ENCODE measurements at regions of chr6 and their contacts with region 1.

Region 1: DNA sequence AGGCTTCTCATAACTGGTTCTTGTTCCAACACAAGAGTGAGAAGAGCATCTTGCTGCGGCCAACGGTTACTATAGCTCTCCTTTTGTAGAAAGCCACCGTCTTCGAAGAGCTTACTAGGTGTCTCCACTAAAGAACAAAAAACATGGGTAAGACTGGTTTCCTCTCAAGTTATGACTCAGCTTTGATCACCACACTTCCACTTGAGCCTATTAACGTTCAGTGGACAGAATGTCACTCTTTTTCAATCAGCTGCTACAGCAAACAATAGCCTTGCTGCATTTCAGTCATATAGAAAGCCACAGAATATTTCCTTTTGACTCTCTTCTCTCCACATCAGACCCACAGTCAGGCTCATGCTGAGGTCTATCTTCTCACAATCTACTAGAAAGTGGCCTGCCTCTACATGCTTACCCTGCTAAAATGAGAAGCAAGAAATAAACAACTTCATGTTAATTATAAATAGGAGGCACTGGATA is 243.5 kb upstream of the PREP start:
- DNase-seq: peak; percentile 70
- H3K4me3 Mint-ChIP-seq: no peak overlapping the region
- H3K27ac Mint-ChIP-seq: peak overlapping the region; percentile 85
- H3K4me1 Mint-ChIP-seq: peaks cover 78% of the 10 kb centered on the region
- H3K27me3 Mint-ChIP-seq: peaks cover 4% of the 10 kb centered on the region

Region 2: DNA sequence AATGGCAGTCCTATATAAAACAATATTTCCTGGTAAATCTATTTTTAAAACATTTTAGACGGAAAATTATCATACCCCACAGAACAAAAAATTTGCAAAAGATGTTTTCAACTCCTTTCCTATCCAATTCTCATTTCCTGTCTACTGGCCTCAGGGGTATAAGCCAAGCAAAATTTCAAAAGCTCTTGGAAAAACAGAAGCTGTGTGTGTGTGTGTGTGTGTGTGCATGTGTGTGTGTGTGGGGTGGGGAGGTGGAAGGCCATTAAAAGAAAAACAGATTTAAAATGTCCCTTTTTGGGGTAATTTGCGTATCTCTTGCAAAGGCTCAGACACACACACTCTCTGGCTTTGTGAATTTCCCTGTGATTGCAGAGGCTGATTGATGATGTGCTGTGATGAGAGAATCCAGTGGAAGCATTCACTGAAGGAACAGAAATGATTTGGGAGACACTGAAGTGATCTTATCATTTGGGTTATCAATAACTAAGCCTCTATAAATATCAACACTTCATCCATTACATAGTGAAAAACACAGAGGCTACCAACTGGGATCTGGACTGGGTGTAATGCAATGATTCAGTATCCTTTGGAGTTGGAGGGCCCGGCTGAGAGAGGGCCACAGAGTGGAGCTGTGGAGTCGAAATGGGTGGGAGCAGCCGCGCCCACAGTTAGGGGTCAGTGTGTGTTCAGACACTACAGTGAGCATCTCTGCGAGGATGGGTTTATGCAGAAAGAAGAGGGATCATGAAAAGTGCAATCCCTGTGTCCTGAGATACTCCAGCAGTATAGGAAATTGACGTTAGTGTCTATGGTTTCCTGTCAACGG is 136.7 kb before region 1 on chr6:
- intact Hi-C with region 1: loop called (anchors 1 kb)
- DNase-seq: no peak
- H3K4me3 Mint-ChIP-seq: no peak overlapping the region
- H3K27ac Mint-ChIP-seq: peak overlapping the region; percentile 1
- H3K4me1 Mint-ChIP-seq: peaks cover 32% of the 10 kb centered on the region
- H3K27me3 Mint-ChIP-seq: peaks cover 27% of the 10 kb centered on the region

Region 3: DNA sequence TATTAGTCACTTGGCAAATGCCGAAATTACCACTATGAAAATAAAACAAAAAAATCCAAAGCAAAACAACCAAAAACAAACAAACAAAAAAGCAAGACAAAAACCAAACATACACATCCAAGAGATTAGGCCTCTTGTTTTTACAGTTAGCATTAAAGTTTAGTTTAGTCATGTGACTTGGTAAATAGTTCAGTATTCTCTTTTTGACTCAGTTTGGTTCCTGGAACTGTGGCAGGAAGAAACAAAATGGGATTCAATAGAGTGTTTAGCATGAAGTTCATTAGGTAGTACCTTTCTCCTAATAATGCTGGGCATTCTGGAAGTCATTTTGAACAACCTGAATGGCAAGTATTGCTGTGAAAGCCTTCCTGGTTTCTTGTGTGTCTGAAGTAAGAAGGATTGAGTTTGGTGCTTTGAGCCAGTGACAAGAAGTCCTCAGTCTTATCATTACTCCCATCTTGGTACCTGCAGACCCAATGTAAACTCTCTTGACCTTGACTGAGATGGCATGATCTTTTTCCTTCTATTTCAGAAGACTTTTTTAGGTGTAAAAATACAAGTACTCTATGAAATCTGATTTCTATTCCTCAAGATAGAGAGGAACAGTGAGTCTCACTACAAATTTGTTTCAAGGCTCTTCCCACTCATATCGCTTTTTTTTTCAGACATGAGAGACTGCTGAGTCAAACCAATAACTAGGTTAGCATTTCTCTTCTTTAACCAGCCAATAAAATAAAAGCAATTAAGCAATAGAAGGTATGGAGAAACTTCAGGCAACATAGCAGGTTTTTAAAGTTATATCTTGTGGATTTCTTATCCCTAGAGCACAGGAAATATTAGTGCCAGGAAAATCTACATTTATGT is 19.9 kb before region 1 on chr6:
- intact Hi-C with region 1: loop called (anchors 1 kb)
- DNase-seq: no peak
- H3K4me3 Mint-ChIP-seq: peak overlapping the region; percentile 32
- H3K27ac Mint-ChIP-seq: peak overlapping the region; percentile 89
- H3K4me1 Mint-ChIP-seq: peaks cover 59% of the 10 kb centered on the region
- H3K27me3 Mint-ChIP-seq: peaks cover 3% of the 10 kb centered on the region

Region 4: DNA sequence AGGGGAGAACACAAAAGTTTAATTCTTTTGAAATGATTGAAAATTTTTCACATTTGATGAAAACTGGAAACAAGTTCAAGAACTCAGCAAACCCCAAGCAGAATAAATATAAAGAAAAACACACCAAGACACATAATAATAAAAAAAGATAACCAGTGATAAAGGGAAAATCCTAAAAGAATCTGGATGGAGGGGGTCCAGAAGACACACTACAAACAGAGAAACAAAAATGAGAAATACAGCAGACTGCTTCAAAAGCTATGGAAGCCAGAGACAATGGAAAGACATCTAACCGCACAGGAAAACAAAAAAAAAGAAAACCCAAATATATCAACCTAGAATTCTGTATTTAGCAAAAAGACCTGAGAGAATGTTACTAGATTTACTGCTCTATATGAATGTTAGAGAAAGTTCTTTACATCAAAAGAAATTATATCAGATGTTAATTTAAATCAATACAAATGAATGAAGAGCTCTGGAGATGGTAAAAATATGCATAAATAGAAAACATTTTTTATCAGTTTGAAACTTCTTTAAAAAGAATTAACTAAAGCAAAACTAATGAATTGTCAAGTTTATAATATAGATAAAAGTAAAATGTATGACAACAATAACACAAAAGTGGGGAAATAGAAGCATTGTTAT is 67.2 kb after region 1 on chr6:
- intact Hi-C with region 1: no loop called
- DNase-seq: no peak
- H3K4me3 Mint-ChIP-seq: no peak overlapping the region
- H3K27ac Mint-ChIP-seq: no peak overlapping the region
- H3K4me1 Mint-ChIP-seq: no peaks in the 10 kb centered on the region
- H3K27me3 Mint-ChIP-seq: peaks cover 10% of the 10 kb centered on the region

Region 5: GRCh38 chr6:105757512-105758200 is 111.2 kb after region 1 on chr6:
- intact Hi-C with region 1: loop called (anchors 1 kb)
- DNase-seq: peak; percentile 28
- H3K4me3 Mint-ChIP-seq: peak overlapping the region; percentile 64
- H3K27ac Mint-ChIP-seq: peak overlapping the region; percentile 77
- H3K4me1 Mint-ChIP-seq: peaks cover 61% of the 10 kb centered on the region
- H3K27me3 Mint-ChIP-seq: no peaks in the 10 kb centered on the region

Region 6: DNA sequence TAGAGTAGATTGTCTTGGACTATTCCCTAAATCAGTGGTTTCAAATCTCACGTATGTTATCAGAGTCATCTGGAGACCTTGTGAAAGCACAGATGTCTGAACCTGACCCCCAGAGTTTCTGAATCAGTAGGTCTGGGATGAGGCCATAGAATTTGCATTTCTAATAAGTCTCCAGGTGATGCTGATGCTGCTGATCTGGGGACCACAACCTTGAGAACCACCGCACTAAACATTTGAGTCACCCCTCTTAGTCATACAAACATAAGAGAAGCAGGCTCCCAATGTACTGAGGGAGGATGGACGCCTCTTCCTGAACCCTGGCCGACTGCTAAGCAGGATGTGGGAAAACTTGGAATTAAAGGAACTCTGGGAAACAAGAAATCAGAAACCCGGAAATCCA is 251.9 kb after region 1 on chr6:
- intact Hi-C with region 1: loop called (anchors 1 kb)
- DNase-seq: no peak
- H3K4me3 Mint-ChIP-seq: no peak overlapping the region
- H3K27ac Mint-ChIP-seq: no peak overlapping the region
- H3K4me1 Mint-ChIP-seq: peaks cover 34% of the 10 kb centered on the region
- H3K27me3 Mint-ChIP-seq: no peaks in the 10 kb centered on the region

Region 7: DNA sequence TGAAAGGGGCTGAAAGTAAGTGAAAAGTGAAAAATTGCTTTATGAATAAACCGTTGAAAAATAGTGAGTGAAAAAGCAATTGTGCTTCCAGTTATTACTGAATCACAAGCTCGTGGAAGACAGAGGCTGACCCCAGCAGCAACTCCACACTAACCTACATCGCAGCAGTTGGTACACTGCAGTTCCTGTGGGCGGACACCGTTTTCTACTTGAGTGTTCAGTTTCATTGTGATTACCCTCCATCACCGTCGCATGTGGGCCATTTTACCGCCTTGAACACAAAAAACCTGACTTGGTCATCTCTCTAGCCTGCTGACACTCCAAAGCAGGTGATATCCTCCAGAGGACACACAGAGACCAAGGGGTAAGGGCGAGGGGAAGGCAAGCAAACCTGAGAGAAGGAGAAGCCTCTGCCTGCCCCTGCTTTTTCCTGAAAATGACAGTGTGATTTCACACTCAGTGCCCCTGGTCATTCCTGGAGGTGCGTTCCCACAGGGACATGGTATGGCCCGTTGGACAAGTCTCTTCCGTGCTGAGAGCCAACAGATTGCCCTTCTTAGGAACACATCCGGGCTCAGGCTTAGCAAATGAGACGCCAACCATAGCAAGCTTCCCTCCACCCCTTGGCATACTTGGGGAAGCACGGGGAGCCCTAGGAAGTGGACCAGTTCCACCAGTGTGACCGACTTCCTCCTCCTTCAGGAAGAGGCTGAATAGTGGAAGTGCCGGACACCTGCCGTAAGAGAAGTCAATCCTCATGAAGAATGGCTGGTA is 468.2 kb after region 1 on chr6:
- intact Hi-C with region 1: loop called (anchors 1 kb)
- DNase-seq: peak; percentile 47
- H3K4me3 Mint-ChIP-seq: peak overlapping the region; percentile 58
- H3K27ac Mint-ChIP-seq: peak overlapping the region; percentile 82
- H3K4me1 Mint-ChIP-seq: peaks cover 93% of the 10 kb centered on the region
- H3K27me3 Mint-ChIP-seq: peaks cover 2% of the 10 kb centered on the region

Region 8: DNA sequence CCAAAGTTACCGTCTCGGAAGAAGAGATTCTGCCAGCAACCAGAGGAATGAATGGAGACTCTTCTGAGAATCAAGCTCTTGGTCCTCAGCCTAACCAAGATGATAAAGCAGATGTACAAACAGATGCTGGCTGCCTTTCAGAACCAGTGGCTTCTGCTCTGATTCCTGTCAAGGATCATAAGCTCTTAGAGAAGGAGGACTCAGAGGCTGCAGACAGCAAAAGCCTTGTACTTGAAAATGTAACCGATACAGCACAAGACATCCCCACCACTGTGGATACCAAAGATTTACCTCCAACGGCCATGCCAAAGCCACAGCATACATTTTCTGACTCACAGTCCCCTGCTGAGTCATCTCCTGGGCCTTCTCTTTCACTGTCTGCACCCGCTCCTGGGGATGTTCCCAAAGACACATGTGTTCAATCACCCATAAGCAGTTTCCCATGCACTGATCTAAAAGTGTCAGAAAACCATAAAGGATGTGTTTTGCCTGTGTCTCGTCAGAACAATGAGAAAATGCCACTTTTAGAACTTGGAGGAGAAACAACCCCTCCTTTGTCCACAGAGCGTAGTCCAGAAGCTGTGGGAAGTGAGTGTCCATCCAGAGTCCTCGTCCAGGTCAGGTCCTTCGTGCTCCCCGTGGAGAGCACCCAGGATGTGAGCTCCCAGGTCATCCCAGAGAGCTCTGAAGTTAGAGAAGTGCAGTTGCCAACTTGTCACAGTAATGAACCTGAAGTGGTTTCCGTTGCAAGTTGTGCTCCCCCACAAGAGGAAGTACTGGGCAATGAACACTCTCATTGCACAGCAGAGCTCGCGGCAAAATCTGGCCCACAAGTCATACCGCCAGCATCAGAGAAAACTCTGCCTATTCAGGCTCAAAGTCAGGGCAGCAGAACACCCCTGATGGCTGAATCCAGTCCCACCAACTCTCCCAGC is 873.3 kb after region 1 on chr6:
- intact Hi-C with region 1: loop called (anchors 1 kb)
- DNase-seq: peak; percentile 74
- H3K4me3 Mint-ChIP-seq: peak overlapping the region; percentile 90
- H3K27ac Mint-ChIP-seq: peak overlapping the region; percentile 98
- H3K4me1 Mint-ChIP-seq: peaks cover 79% of the 10 kb centered on the region
- H3K27me3 Mint-ChIP-seq: no peaks in the 10 kb centered on the region